HCT116 (cell line): ENCODE measurements at regions of chr16 and their contacts with region 1.

Region 1: GRCh38 chr16:81140930-81141780 is 45.0 kb upstream of the GCSH start:
- DNase-seq: peak; percentile 45
- ATAC-seq: peak; percentile 46
- H3K4me3 ChIP-seq: 0 out of 4 replicates have a peak overlapping the region, but pooled peaks of 1 of the 2 experiments have one; percentile 15
- H3K27ac ChIP-seq: peak overlapping the region; percentile 59
- H3K4me1 ChIP-seq: peaks cover 42 to 57% of the 10 kb centered on the region in 2 experiments
- H3K27me3 ChIP-seq: no peaks in the 10 kb centered on the region
- CTCF ChIP-seq: peak; percentile 38 to 90 (median 89); a peak in 5 of 6 replicates
- POLR2A ChIP-seq: no peak
- RAD21 ChIP-seq: peak; percentile 40; the same call in 1 of the 2 replicates

Region 2: GRCh38 chr16:81006814-81007696 is 134.1 kb before region 1 on chr16 and contains the starts of genes CENPN and CMC2:
- CTCF ChIA-PET with region 1: no interaction called
- POLR2A ChIA-PET with region 1: no interaction called
- RAD21 ChIA-PET with region 1: no interaction called
- intact Hi-C with region 1: loop called (anchors 5 kb)
- DNase-seq: peak; percentile 100
- ATAC-seq: peak; percentile 89
- H3K4me3 ChIP-seq: peak within 1 kb of the TSS; percentile 53 to 93
- H3K27ac ChIP-seq: peak within 1 kb of the TSS; percentile 97
- H3K4me1 ChIP-seq: peaks cover 16 to 26% of the 10 kb centered on the region in 2 experiments
- H3K27me3 ChIP-seq: no peaks in the 10 kb centered on the region
- CTCF ChIP-seq: no peak
- POLR2A ChIP-seq: peak; percentile 92
- RAD21 ChIP-seq: no peak
- total RNA-seq, gene CENPN: 76.7 TPM
- total RNA-seq, gene CMC2: 119 TPM

Region 3: GRCh38 chr16:81040842-81041241 is 100.3 kb before region 1 on chr16:
- CTCF ChIA-PET with region 1: interaction called, 3 read pairs
- POLR2A ChIA-PET with region 1: no interaction called
- RAD21 ChIA-PET with region 1: interaction called in 1 of 2 experiments, 3 read pairs
- intact Hi-C with region 1: loop called (anchors 1 kb)
- DNase-seq: no peak
- ATAC-seq: no peak
- H3K4me3 ChIP-seq: no peak overlapping the region
- H3K27ac ChIP-seq: no peak overlapping the region
- H3K4me1 ChIP-seq: peaks cover 5 to 9% of the 10 kb centered on the region in 2 experiments; a peak in 3 of 4 replicates
- H3K27me3 ChIP-seq: no peaks in the 10 kb centered on the region
- CTCF ChIP-seq: no peak
- POLR2A ChIP-seq: no peak
- RAD21 ChIP-seq: no peak

Region 4: GRCh38 chr16:81095953-81096717 is 45.0 kb before region 1 on chr16 and contains the start of gene GCSH:
- CTCF ChIA-PET with region 1: interaction called, 4 read pairs
- POLR2A ChIA-PET with region 1: no interaction called
- RAD21 ChIA-PET with region 1: no interaction called
- intact Hi-C with region 1: loop called (anchors 5 kb)
- DNase-seq: peak; percentile 99
- ATAC-seq: peak; percentile 98
- H3K4me3 ChIP-seq: peak within 1 kb of the TSS; percentile 89 to 95
- H3K27ac ChIP-seq: peak within 1 kb of the TSS; percentile 70
- H3K4me1 ChIP-seq: peaks cover 0 to 30% of the 10 kb centered on the region in 2 experiments; a peak in 3 of 4 replicates
- H3K27me3 ChIP-seq: no peaks in the 10 kb centered on the region
- CTCF ChIP-seq: no peak
- POLR2A ChIP-seq: peak; percentile 45
- RAD21 ChIP-seq: no peak
- total RNA-seq, gene GCSH: 117 TPM

Region 5: DNA sequence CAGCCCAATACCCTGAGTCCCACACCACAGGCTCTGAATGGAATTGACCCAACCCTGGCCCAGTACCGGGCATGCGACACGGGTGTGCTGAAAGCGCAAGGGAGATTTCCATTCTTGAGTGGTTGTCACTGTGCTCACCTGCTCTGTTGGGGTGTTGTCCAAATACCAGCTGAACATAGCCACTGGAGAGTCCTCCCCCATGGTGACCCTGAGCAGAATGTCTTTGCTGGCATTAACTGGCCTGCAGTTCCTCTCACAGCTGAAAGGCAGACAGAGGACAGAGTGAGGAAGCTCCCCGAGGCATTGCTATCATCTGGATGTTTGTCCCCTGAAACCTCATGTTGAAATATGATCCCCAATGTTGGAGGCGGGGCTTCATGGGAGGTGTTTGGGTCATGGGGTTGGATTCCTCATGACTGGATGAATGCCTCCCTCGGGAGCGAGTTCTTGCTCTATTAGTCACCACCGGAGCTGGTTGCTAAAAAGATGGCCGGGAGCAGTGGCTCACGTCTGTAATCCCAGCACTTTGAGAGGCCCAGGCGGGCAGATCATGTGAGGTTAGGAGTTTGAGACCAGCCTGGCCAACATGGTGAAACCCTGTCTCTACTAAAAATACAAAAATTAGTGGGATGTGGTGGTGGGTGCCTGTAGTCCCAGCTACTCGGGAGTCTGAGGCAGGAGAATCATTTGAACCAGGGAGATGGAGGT is 40.0 kb after region 1 on chr16:
- CTCF ChIA-PET with region 1: interaction called, 9 read pairs
- POLR2A ChIA-PET with region 1: interaction called, 8 read pairs
- RAD21 ChIA-PET with region 1: no interaction called
- intact Hi-C with region 1: loop called (anchors 1 kb)
- DNase-seq: peak; percentile 93
- ATAC-seq: peak; percentile 96
- H3K4me3 ChIP-seq: peak overlapping the region; percentile 27 to 58
- H3K27ac ChIP-seq: peak overlapping the region; percentile 42
- H3K4me1 ChIP-seq: peaks cover 15 to 29% of the 10 kb centered on the region in 2 experiments
- H3K27me3 ChIP-seq: no peaks in the 10 kb centered on the region
- CTCF ChIP-seq: no peak
- POLR2A ChIP-seq: peak; percentile 75
- RAD21 ChIP-seq: no peak

Region 6: DNA sequence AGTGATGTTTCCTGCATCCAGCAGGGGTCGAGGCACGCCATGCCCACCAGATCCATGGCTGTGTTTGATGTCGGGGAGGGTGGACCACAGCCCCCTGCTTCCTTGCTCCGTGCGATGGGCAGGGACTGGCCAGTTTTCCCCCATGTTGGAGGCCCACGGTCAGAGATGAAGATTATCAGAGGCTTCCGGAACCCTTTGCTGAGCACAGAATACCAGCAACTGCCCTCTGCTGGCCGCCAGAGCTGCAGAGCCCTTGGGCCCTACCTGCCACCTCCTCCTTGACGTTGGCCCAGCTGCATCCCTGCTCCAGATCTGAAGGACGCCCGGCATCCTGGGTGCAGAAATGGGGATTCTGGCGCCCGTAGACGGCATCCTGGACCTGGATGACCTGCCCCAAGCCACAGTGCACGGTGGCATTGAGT is 73.6 kb after region 1 on chr16:
- CTCF ChIA-PET with region 1: no interaction called
- POLR2A ChIA-PET with region 1: no interaction called
- RAD21 ChIA-PET with region 1: interaction called in 1 of 2 experiments, 3 read pairs
- intact Hi-C with region 1: loop called (anchors 2 kb)
- DNase-seq: peak; percentile 37
- ATAC-seq: peak; percentile 97
- H3K4me3 ChIP-seq: no peak overlapping the region
- H3K27ac ChIP-seq: no peak overlapping the region
- H3K4me1 ChIP-seq: peaks cover 0 to 5% of the 10 kb centered on the region in 2 experiments; a peak in 1 of 4 replicates
- H3K27me3 ChIP-seq: no peaks in the 10 kb centered on the region
- CTCF ChIP-seq: peak; percentile 85 to 96 (median 92)
- POLR2A ChIP-seq: no peak
- RAD21 ChIP-seq: peak; percentile 73

Region 7: GRCh38 chr16:81314603-81315270 is 173.6 kb after region 1 on chr16 and contains the start of gene GAN:
- CTCF ChIA-PET with region 1: no interaction called
- POLR2A ChIA-PET with region 1: no interaction called
- RAD21 ChIA-PET with region 1: no interaction called
- intact Hi-C with region 1: loop called (anchors 5 kb)
- DNase-seq: peak; percentile 94
- ATAC-seq: peak; percentile 93
- H3K4me3 ChIP-seq: peak within 1 kb of the TSS; percentile 69 to 92
- H3K27ac ChIP-seq: peak within 1 kb of the TSS; percentile 78
- H3K4me1 ChIP-seq: peaks cover 18 to 35% of the 10 kb centered on the region in 2 experiments
- H3K27me3 ChIP-seq: no peaks in the 10 kb centered on the region
- CTCF ChIP-seq: no peak
- POLR2A ChIP-seq: peak; percentile 97
- RAD21 ChIP-seq: no peak
- total RNA-seq, gene GAN: 22.5 TPM